GM12878 (cell line): ENCODE measurements at regions of chrX and their contacts with region 1.

Region 1: DNA sequence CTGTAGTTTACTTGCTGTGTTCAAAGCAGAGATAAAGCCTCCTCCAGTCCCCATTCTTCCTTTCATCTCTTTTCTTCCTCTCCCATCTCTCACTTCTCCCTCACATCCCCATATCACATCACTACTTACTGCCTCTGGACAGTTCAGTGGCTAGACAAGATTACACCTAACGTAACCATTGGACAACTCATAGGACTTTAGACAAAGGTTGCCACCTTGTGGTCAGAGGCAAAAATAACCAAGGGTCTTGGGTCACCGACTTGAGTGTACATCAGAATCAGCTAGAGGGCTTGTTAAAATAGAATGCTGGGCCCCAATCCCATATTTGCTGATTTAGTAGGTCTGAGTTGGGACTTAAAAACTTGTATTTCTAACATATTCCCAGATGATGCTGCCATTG is 109.3 kb upstream of the DGKK start:
- DNase-seq: peak; percentile 11
- ATAC-seq: peak; percentile 93
- H3K4me3 ChIP-seq: no peak overlapping the region
- H3K27ac ChIP-seq: no peak overlapping the region
- H3K4me1 ChIP-seq: no peaks in the 10 kb centered on the region
- H3K27me3 ChIP-seq: no peaks in the 10 kb centered on the region
- CTCF ChIP-seq: peak; percentile 61 to 70 (median 68); a peak in 5 of 6 replicates
- EP300 ChIP-seq: no peak
- POLR2A ChIP-seq: no peak
- RAD21 ChIP-seq: peak; percentile 75

Region 2: GRCh38 chrX:49884290-49884862 is 695.6 kb before region 1 on chrX:
- CTCF ChIA-PET with region 1: interaction called, 6 read pairs
- POLR2A ChIA-PET with region 1: no interaction called
- RAD21 ChIA-PET with region 1: no interaction called
- SMC1A ChIA-PET with region 1: no interaction called
- in situ Hi-C with region 1: no loop called
- intact Hi-C with region 1: loop called (anchors 10 kb)
- DNase-seq: peak; percentile 7
- ATAC-seq: peak; percentile 80
- H3K4me3 ChIP-seq: no peak overlapping the region
- H3K27ac ChIP-seq: no peak overlapping the region
- H3K4me1 ChIP-seq: no peaks in the 10 kb centered on the region; the same call in 1 of the 2 replicates
- H3K27me3 ChIP-seq: no peaks in the 10 kb centered on the region
- CTCF ChIP-seq: peak; percentile 76 to 88 (median 83)
- EP300 ChIP-seq: no peak
- POLR2A ChIP-seq: no peak
- RAD21 ChIP-seq: peak; percentile 45; the same call in 1 of the 2 replicates

Region 3: DNA sequence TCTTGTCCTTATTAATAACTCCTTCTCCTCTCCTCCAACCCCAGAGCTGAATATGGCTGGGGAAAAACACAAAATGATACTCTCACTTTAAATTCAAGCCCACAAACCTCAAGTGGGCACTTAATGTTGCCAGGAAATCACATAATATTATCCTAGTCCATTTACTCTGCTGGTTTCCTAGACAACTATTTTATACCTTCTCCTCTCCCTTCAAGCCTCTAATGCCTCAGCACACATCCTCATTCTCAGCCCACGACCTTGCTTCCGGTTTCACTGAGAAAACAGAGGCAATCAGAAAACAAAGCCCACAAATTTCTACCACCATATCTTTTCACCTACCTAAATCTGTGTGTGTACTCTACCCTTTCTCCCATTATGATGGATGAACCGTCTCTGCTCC is 669.6 kb before region 1 on chrX:
- CTCF ChIA-PET with region 1: interaction called, 10 read pairs
- POLR2A ChIA-PET with region 1: no interaction called
- RAD21 ChIA-PET with region 1: no interaction called
- SMC1A ChIA-PET with region 1: no interaction called
- in situ Hi-C with region 1: loop called (anchors 5 kb)
- intact Hi-C with region 1: loop called (anchors 2 kb)
- DNase-seq: no peak
- ATAC-seq: peak; percentile 71
- H3K4me3 ChIP-seq: no peak overlapping the region
- H3K27ac ChIP-seq: no peak overlapping the region
- H3K4me1 ChIP-seq: no peaks in the 10 kb centered on the region; the same call in 1 of the 2 replicates
- H3K27me3 ChIP-seq: no peaks in the 10 kb centered on the region
- CTCF ChIP-seq: no peak
- EP300 ChIP-seq: no peak
- POLR2A ChIP-seq: no peak
- RAD21 ChIP-seq: no peak

Region 4: GRCh38 chrX:49915361-49916222 is 664.4 kb before region 1 on chrX:
- CTCF ChIA-PET with region 1: interaction called, 10 read pairs
- POLR2A ChIA-PET with region 1: no interaction called
- RAD21 ChIA-PET with region 1: no interaction called
- SMC1A ChIA-PET with region 1: interaction called, 5 read pairs
- in situ Hi-C with region 1: loop called (anchors 5 kb)
- intact Hi-C with region 1: loop called (anchors 2 kb)
- DNase-seq: no peak
- ATAC-seq: peak; percentile 90
- H3K4me3 ChIP-seq: no peak overlapping the region
- H3K27ac ChIP-seq: no peak overlapping the region
- H3K4me1 ChIP-seq: no peaks in the 10 kb centered on the region
- H3K27me3 ChIP-seq: no peaks in the 10 kb centered on the region
- CTCF ChIP-seq: peak; percentile 81 to 92 (median 85)
- EP300 ChIP-seq: no peak
- POLR2A ChIP-seq: no peak
- RAD21 ChIP-seq: peak; percentile 93

Region 5: DNA sequence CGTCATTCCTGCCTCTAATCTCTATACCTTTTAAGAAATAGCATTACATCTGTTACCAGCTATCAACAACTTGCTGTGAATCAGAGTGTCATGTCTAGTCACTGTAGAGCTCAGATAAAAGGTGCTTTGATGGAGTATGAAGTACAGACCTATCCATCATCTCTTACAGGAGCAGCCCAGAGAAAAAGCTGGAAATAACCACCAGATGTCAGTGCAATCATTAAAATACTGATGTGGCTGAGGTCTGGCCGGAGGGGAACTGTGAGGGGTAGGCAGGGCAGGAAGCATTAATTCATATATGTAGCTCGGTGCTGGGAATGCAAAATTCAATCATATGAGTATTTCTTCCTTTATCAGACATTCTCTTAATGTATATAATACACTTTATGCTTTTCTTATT is 479.8 kb before region 1 on chrX:
- CTCF ChIA-PET with region 1: interaction called, 14 read pairs
- POLR2A ChIA-PET with region 1: no interaction called
- RAD21 ChIA-PET with region 1: no interaction called
- SMC1A ChIA-PET with region 1: interaction called, 7 read pairs
- in situ Hi-C with region 1: loop called (anchors 10 kb)
- intact Hi-C with region 1: loop called (anchors 2 kb)
- DNase-seq: no peak
- ATAC-seq: peak; percentile 64
- H3K4me3 ChIP-seq: no peak overlapping the region
- H3K27ac ChIP-seq: no peak overlapping the region
- H3K4me1 ChIP-seq: no peaks in the 10 kb centered on the region
- H3K27me3 ChIP-seq: no peaks in the 10 kb centered on the region
- CTCF ChIP-seq: peak in 1 of 3 experiments; percentile 23; a peak in 2 of 6 replicates
- EP300 ChIP-seq: no peak
- POLR2A ChIP-seq: no peak
- RAD21 ChIP-seq: peak; percentile 56

Region 6: DNA sequence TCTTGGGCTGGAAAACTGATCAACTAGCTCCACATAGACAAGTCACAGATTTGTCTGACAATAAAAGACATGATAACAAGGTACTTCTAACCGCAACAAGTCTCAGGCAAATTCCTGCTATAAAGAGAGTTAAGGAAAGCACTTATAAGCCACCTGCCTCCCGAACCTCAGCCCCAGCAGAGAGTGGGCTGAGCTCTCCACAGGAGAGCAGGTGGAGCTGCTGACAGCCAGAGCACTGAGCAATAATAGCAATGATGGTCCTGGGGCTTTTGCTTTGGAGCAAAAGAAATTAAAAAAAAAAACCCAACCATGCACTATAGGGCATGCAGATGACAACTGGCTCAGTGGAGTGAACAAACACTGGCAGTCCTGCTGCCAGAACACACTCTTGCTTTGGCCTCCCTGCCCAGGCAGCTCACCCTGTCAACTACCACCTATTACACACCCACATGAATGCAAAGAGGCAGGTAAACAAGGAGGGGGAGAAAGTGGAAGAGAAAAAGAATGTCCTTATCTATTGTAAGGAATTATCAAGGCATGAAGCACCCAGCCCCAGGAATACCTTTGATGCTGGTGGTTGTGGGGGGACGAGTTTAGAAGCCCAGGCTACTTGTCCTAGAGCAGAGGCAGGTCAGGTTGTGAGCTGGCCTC is 26.5 kb after region 1 on chrX:
- CTCF ChIA-PET with region 1: no interaction called
- POLR2A ChIA-PET with region 1: no interaction called
- RAD21 ChIA-PET with region 1: no interaction called
- SMC1A ChIA-PET with region 1: no interaction called
- in situ Hi-C with region 1: no loop called
- intact Hi-C with region 1: no loop called
- DNase-seq: no peak
- ATAC-seq: no peak
- H3K4me3 ChIP-seq: no peak overlapping the region
- H3K27ac ChIP-seq: no peak overlapping the region
- H3K4me1 ChIP-seq: no peaks in the 10 kb centered on the region
- H3K27me3 ChIP-seq: no peaks in the 10 kb centered on the region; a peak in 1 of 4 replicates
- CTCF ChIP-seq: no peak
- EP300 ChIP-seq: no peak
- POLR2A ChIP-seq: no peak
- RAD21 ChIP-seq: no peak